ENCODE measurements at regions of chr19 and their contacts with region 1.

Region 1: GRCh38 chr19:43901395-43902390 is 33.4 kb downstream of the ZNF45 start:
- DNase-seq: peak; percentile 76 to 91
- ATAC-seq: peak; percentile 98 to 100 (median 100)
- H3K4me3 ChIP-seq: peak overlapping the region; percentile 31 to 73 (median 67)
- H3K27ac ChIP-seq: peak overlapping the region in 7 of 10 donors; percentile 20 to 69 (median 49)
- H3K4me1 ChIP-seq: peaks cover 0 to 21% (median 11%) of the 10 kb centered on the region in 9 donors
- H3K27me3 ChIP-seq: no peaks in the 10 kb centered on the region
- CTCF ChIP-seq: no peak

Region 2: GRCh38 chr19:43498233-43498842 is 403.4 kb before region 1 on chr19:
- intact Hi-C with region 1: no loop called
- DNase-seq: peak in 1 of 2 donors; percentile 45
- ATAC-seq: peak; percentile 60 to 83 (median 74)
- H3K4me3 ChIP-seq: no peak overlapping the region
- H3K27ac ChIP-seq: peak overlapping the region in 6 of 10 donors; percentile 10 to 71 (median 54)
- H3K4me1 ChIP-seq: peaks cover 0 to 39% (median 18%) of the 10 kb centered on the region in 9 donors
- H3K27me3 ChIP-seq: no peaks in the 10 kb centered on the region
- CTCF ChIP-seq: no peak

Region 3: DNA sequence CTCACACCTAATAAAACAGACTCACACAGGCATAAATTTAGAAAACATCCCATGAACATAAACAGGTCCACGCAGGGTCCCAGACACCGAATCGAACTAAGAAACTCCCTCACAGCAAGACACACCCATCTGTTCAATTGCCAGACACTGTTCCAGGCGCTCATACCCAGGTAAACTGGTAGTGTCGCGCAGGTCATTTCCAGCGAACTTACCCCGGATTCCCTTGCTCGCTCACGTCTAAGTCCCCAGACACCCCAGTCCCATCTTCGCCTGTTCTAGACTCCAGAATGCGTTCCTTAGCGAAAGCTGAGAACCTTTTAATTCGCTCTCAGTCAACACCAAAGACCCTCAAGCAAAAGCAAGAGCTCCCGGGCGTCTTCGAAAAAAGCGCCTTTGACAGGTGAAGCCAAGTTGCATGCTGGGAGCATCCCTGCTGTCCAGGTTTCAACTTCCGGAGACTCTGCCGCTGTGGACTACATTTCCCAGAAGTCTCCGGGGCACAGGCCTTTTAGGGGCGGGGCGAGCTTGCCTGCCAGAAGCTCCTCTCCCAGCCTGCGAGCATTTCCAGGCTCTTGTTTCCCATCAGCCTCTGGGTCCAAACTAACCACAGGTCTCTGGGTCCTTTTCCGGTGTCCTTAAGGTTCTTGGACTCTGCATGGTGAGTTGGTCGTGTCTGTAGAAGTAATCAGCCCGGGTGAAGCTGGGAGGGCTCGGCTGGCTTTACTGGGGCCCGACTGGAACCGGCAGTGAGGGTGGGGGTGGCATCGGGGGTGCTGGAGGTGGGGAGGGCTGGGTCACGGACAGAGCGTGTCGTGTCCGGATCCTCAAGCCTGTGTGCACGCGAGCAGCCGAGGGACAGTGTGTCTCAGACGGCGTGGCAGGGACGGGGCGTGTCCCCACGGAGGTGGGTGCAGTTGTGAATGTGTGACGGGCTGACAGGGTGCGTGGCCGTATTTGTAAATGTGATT is 74.6 kb before region 1 on chr19 and contains the start of gene ZNF283:
- intact Hi-C with region 1: loop called in 1 of 10 experiments (anchors 10 kb)
- DNase-seq: peak; percentile 87 to 91
- ATAC-seq: peak; percentile 98 to 100 (median 99)
- H3K4me3 ChIP-seq: peak within 1 kb of the TSS; percentile 60 to 89 (median 68)
- H3K27ac ChIP-seq: peak within 1 kb of the TSS in 9 of 10 donors; percentile 50 to 86 (median 73)
- H3K4me1 ChIP-seq: peaks cover 0 to 16% (median 12%) of the 10 kb centered on the region in 9 donors
- H3K27me3 ChIP-seq: peaks cover 0 to 27% (median 0%) of the 10 kb centered on the region in 7 donors
- CTCF ChIP-seq: no peak
- total RNA-seq, gene ZNF283: 7.5 to 16.9 (median 12.1) TPM

Region 4: DNA sequence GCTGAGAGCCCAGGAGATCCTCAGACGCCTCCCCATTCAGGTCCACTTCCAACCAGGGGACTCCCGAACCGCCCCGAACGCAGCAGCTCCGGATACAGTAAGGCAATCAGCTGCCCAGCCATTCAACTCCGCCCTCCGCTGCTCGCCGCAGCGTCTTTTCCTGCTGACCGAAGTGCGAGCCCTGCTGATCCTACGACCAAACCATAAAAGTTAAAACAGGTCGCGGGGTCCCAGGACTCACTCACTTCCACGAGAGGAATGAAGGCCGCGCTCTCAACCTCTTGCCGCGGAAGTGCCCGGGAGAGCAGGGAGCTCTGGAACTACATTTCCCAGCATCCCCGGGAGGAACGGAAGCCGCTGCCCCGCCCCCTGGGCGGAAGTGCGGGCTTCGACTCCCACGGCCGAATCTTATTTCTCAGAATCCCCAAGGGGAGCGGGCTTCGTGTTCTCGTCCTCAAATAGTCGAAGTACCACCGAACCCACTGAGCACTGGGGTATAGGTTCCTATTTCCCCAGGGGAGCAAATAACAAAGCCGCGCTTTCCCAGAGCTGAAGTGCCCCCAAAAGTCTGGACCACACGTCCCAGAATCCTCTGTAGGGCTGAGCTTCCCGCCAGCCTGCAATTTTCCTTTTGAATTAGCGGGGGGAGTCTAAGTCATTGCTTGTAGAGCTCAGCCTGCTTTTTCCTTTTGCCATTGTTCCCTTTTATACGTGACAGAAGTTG is 33.5 kb after region 1 on chr19 and contains the start of gene ZNF45:
- intact Hi-C with region 1: loop called in 1 of 10 experiments (anchors 1 kb)
- DNase-seq: peak; percentile 85 to 94
- ATAC-seq: peak; percentile 97 to 99 (median 99)
- H3K4me3 ChIP-seq: peak within 1 kb of the TSS; percentile 43 to 76 (median 66)
- H3K27ac ChIP-seq: peak within 1 kb of the TSS; percentile 39 to 92 (median 86)
- H3K4me1 ChIP-seq: peaks cover 0 to 24% (median 18%) of the 10 kb centered on the region in 9 donors
- H3K27me3 ChIP-seq: no peaks in the 10 kb centered on the region
- CTCF ChIP-seq: no peak
- total RNA-seq, gene ZNF45: 7.0 to 10.7 (median 8.0) TPM

Region 5: GRCh38 chr19:44093931-44094765 is 192.5 kb after region 1 on chr19 and contains the start of gene ZNF224:
- intact Hi-C with region 1: no loop called
- DNase-seq: peak; percentile 87 to 95
- ATAC-seq: peak; percentile 98 to 100 (median 99)
- H3K4me3 ChIP-seq: peak within 1 kb of the TSS; percentile 74 to 94 (median 84)
- H3K27ac ChIP-seq: peak within 1 kb of the TSS; percentile 38 to 91 (median 80)
- H3K4me1 ChIP-seq: peaks cover 3 to 21% (median 12%) of the 10 kb centered on the region in 9 donors
- H3K27me3 ChIP-seq: no peaks in the 10 kb centered on the region
- CTCF ChIP-seq: no peak
- total RNA-seq, gene ZNF224: 8.1 to 16.0 (median 13.3) TPM